A549 (cell line): ENCODE measurements at regions of chr21 and their contacts with region 1.

Region 1: GRCh38 chr21:34693192-34693810 is 24.5 kb downstream of the CLIC6 start:
- DNase-seq: peak; percentile 28 to 48
- ATAC-seq: peak; percentile 56 to 67; a peak in 3 of 6 replicates
- H3K4me3 ChIP-seq: no peak overlapping the region
- H3K27ac ChIP-seq: no peak overlapping the region
- H3K4me1 ChIP-seq: no peaks in the 10 kb centered on the region
- CTCF ChIP-seq: peak; percentile 72
- EP300 ChIP-seq: no peak
- POLR2A ChIP-seq: no peak
- RAD21 ChIP-seq: peak; percentile 66 to 69

Region 2: GRCh38 chr21:34707876-34708325 is 14.6 kb after region 1 on chr21:
- CTCF ChIA-PET with region 1: interaction called, 29 read pairs
- POLR2A ChIA-PET with region 1: no interaction called
- DNase-seq: no peak
- ATAC-seq: no peak
- H3K4me3 ChIP-seq: no peak overlapping the region
- H3K27ac ChIP-seq: no peak overlapping the region
- H3K4me1 ChIP-seq: no peaks in the 10 kb centered on the region
- CTCF ChIP-seq: no peak
- EP300 ChIP-seq: no peak
- POLR2A ChIP-seq: no peak
- RAD21 ChIP-seq: no peak

Region 3: GRCh38 chr21:34726627-34727337 is 33.5 kb after region 1 on chr21:
- CTCF ChIA-PET with region 1: interaction called, 10 read pairs
- POLR2A ChIA-PET with region 1: no interaction called
- DNase-seq: no peak
- ATAC-seq: no peak
- H3K4me3 ChIP-seq: no peak overlapping the region
- H3K27ac ChIP-seq: no peak overlapping the region
- H3K4me1 ChIP-seq: no peaks in the 10 kb centered on the region
- CTCF ChIP-seq: no peak
- EP300 ChIP-seq: no peak
- POLR2A ChIP-seq: no peak
- RAD21 ChIP-seq: no peak

Region 4: GRCh38 chr21:34874684-34875513 is 181.6 kb after region 1 on chr21:
- CTCF ChIA-PET with region 1: no interaction called
- POLR2A ChIA-PET with region 1: no interaction called
- DNase-seq: no peak
- ATAC-seq: no peak
- H3K4me3 ChIP-seq: no peak overlapping the region
- H3K27ac ChIP-seq: no peak overlapping the region
- H3K4me1 ChIP-seq: peaks cover 26% of the 10 kb centered on the region
- CTCF ChIP-seq: no peak
- EP300 ChIP-seq: no peak
- POLR2A ChIP-seq: no peak
- RAD21 ChIP-seq: no peak

Region 5: GRCh38 chr21:35840197-35840799 is 1147.0 kb after region 1 on chr21:
- CTCF ChIA-PET with region 1: interaction called, 25 read pairs
- POLR2A ChIA-PET with region 1: no interaction called
- DNase-seq: peak; percentile 5 to 72
- ATAC-seq: peak in 1 of 2 experiments; percentile 62; a peak in 3 of 6 replicates
- H3K4me3 ChIP-seq: no peak overlapping the region
- H3K27ac ChIP-seq: no peak overlapping the region
- H3K4me1 ChIP-seq: no peaks in the 10 kb centered on the region
- CTCF ChIP-seq: peak; percentile 77
- EP300 ChIP-seq: no peak
- POLR2A ChIP-seq: no peak
- RAD21 ChIP-seq: peak; percentile 72 to 81